ENCODE measurements at regions of chr1 and their contacts with region 1.

Region 1: GRCh38 chr1:92317836-92318493 is 19.1 kb downstream of the RPAP2 start:
- DNase-seq: no peak
- H3K4me3 Mint-ChIP-seq: peak overlapping the region; percentile 3
- H3K27ac Mint-ChIP-seq: peak overlapping the region; percentile 63
- H3K4me1 Mint-ChIP-seq: peaks cover 59% of the 10 kb centered on the region
- H3K27me3 Mint-ChIP-seq: no peaks in the 10 kb centered on the region

Region 2: DNA sequence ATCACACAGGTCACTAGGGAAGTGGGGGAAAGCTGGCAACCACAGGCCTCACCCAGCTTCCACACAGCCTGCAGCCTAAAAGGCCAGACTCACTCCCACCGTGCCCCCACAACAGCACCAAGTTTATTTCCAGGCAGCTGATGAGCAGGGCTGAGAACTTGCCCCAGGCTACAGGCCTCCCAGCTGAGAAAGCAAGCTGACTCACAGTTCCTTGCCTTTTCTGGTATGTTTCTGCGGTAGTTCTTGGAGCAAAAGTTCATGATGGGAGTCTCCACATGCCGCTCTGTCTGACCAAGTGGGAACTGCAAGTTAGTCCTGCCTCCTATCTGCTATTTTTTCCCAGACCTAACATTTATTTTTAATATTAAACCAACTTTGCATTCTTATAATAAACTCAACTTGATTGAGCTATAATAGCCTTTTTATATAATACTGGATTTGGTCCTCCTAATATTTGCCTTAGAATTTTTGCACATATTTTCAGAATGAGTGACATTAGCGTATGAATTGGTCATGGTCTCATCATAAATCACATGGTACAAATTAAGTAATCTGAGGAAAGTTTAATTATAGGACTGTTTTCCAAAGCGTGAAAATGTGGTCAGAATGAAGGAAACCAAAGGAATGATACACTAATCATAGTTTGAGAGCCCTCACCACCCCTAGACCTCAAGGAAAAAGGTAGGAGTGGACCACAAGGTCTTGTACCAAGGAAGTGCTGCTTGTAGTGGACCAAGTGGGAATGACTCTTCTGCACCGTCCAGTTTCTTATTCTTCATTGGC is 11.6 kb after region 1 on chr1:
- CTCF ChIA-PET with region 1: no interaction called
- POLR2A ChIA-PET with region 1: no interaction called
- intact Hi-C with region 1: no loop called
- DNase-seq: no peak
- H3K4me3 Mint-ChIP-seq: no peak overlapping the region
- H3K27ac Mint-ChIP-seq: no peak overlapping the region
- H3K4me1 Mint-ChIP-seq: peaks cover 19% of the 10 kb centered on the region
- H3K27me3 Mint-ChIP-seq: no peaks in the 10 kb centered on the region

Region 3: DNA sequence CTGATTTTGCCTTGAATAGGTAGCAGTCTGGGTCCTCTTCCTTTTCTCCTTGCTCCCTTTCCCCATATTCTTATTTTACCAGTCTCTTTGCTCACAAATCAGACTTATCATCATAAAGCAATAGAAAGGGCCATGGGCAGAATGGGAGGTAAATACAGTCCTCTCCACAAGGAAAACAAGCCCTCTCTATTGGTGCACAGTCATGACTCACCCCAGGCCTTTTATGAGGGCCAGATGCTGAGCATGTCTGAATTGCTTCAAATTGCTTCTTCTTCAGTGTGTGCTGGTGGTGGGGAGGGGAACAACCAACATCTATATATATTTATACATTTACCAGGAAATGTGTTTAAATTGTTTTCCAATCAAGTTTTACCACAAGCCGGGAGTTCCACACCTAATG is 93.5 kb after region 1 on chr1:
- CTCF ChIA-PET with region 1: no interaction called
- POLR2A ChIA-PET with region 1: no interaction called
- intact Hi-C with region 1: loop called (anchors 2 kb)
- DNase-seq: no peak
- H3K4me3 Mint-ChIP-seq: no peak overlapping the region
- H3K27ac Mint-ChIP-seq: no peak overlapping the region
- H3K4me1 Mint-ChIP-seq: peaks cover 30% of the 10 kb centered on the region
- H3K27me3 Mint-ChIP-seq: no peaks in the 10 kb centered on the region

Region 4: DNA sequence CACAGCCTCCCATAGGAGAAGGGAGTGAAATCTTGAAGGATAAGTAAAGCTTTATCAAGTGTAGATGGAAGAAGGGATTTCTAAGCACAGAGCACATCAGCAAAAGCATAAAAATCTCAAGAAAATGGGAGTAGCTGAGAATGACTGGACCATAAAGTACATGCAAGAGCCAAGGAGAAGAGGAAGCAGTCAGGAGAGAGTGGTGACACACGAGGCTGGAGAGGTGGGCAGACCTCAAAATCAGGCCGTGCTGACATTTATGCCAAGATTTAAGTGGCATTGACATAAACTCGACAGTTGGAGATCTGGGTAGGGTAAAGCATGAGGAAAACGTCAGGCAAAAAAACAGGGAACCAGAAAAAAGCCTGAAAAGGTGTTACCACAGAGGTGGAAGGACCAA is 106.4 kb after region 1 on chr1:
- CTCF ChIA-PET with region 1: no interaction called
- POLR2A ChIA-PET with region 1: no interaction called
- intact Hi-C with region 1: no loop called
- DNase-seq: no peak
- H3K4me3 Mint-ChIP-seq: no peak overlapping the region
- H3K27ac Mint-ChIP-seq: no peak overlapping the region
- H3K4me1 Mint-ChIP-seq: no peaks in the 10 kb centered on the region
- H3K27me3 Mint-ChIP-seq: no peaks in the 10 kb centered on the region

Region 5: DNA sequence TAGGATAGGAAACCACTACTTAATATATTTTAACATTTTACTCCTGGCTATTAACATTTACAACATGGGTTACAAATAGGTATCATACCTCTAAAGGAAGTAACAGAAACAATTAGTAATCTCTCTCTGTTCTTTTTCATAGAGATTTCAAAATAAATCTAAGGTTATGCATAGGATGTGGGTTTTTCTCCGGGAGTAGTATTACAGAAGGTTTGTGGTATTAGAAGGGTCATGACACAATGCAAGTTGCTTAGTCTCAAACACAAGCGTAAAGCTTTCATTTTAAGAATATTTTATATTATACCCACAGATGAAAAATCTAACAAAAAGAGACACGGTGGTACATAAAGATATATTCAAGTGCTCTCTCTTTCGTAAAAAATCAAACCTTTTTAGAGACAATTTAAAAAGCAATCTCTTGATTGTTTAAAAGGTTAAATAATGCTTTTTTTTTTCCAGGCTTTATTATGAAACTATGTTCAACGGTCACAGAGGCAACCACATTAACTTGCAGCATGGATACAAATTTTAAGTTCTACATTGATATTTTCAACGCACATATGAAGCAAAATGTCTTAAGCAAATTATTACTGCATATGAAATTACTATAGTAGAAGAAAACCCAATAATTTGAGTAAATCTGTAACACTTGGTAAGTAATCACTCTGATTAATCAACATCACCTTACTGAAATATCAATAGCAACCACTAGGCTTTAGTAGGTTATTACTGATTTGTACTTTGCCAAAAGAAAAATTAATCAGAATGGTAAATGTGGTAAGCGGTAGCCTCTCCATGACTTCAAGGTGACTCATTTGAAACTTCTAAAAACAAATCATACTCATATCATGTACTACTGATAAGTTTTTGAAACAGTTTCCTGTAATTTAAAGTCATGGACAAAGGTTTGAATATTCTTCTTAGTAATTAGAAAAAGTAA is 266.1 kb after region 1 on chr1:
- CTCF ChIA-PET with region 1: no interaction called
- POLR2A ChIA-PET with region 1: interaction called, 3 read pairs
- intact Hi-C with region 1: loop called (anchors 2 kb)
- DNase-seq: no peak
- H3K4me3 Mint-ChIP-seq: peak overlapping the region; percentile 65
- H3K27ac Mint-ChIP-seq: peak overlapping the region; percentile 92
- H3K4me1 Mint-ChIP-seq: peaks cover 64% of the 10 kb centered on the region
- H3K27me3 Mint-ChIP-seq: no peaks in the 10 kb centered on the region